Endothelial cell of umbilical vein (primary cell): ENCODE measurements at regions of chr12 and their contacts with region 1.

Region 1: DNA sequence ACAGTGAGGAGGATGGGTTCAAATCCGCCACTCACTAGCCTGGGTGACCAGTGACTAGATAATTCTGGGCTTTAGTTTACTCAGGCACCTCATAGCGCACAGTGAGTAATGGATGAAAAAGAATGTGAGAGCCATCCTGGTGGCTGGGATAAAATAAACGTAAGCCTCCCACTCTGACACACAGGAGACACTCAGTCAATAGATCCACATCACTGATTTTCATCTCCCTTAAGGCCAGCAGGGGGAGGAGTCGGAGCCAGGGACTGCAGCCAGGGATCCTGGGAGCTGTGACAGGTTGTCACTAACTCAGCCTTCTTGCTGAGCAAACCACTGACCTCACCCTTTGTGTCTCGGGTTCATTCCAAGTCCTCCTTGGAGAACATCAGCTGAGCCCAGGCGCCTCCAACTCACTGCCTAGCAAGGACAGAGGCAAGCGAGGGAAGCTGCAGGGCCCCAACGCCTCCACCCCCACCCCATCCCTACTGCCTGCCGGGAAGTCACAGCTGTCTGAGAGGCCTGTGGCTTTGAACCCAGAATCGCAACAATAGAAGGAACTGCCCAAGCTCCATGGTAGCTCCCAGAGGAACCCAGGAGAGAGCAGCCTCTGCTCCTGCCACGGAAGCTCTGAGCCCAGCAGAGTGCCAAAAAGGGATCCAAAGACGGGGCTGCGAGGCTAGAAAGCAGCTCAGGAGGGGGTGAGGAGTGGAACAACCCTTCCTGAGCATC is 30.7 kb downstream of the PXN start:
- DNase-seq: peak; percentile 79
- H3K4me3 ChIP-seq: no peak overlapping the region
- H3K27ac ChIP-seq: peak overlapping the region; percentile 100
- H3K4me1 ChIP-seq: peaks cover 87% of the 10 kb centered on the region
- H3K27me3 ChIP-seq: no peaks in the 10 kb centered on the region
- CTCF ChIP-seq: peak; percentile 50 to 55
- POLR2A ChIP-seq: peak; percentile 22

Region 2: GRCh38 chr12:120067084-120067869 is 167.5 kb before region 1 on chr12:
- CTCF ChIA-PET with region 1: no interaction called
- POLR2A ChIA-PET with region 1: no interaction called
- dilution Hi-C with region 1: no loop called
- intact Hi-C with region 1: no loop called
- DNase-seq: no peak
- H3K4me3 ChIP-seq: no peak overlapping the region
- H3K27ac ChIP-seq: no peak overlapping the region
- H3K4me1 ChIP-seq: no peaks in the 10 kb centered on the region
- H3K27me3 ChIP-seq: peaks cover 25 to 37% of the 10 kb centered on the region in 2 experiments
- CTCF ChIP-seq: no peak
- POLR2A ChIP-seq: no peak

Region 3: GRCh38 chr12:120200364-120200800 is 34.4 kb before region 1 on chr12:
- CTCF ChIA-PET with region 1: interaction called, 15 read pairs
- POLR2A ChIA-PET with region 1: interaction called, 46 read pairs
- dilution Hi-C with region 1: no loop called
- intact Hi-C with region 1: no loop called
- DNase-seq: peak; percentile 27
- H3K4me3 ChIP-seq: peak overlapping the region; percentile 31 to 84 (median 78)
- H3K27ac ChIP-seq: peak overlapping the region; percentile 34
- H3K4me1 ChIP-seq: peaks cover 42% of the 10 kb centered on the region
- H3K27me3 ChIP-seq: no peaks in the 10 kb centered on the region
- CTCF ChIP-seq: no peak
- POLR2A ChIP-seq: no peak

Region 4: DNA sequence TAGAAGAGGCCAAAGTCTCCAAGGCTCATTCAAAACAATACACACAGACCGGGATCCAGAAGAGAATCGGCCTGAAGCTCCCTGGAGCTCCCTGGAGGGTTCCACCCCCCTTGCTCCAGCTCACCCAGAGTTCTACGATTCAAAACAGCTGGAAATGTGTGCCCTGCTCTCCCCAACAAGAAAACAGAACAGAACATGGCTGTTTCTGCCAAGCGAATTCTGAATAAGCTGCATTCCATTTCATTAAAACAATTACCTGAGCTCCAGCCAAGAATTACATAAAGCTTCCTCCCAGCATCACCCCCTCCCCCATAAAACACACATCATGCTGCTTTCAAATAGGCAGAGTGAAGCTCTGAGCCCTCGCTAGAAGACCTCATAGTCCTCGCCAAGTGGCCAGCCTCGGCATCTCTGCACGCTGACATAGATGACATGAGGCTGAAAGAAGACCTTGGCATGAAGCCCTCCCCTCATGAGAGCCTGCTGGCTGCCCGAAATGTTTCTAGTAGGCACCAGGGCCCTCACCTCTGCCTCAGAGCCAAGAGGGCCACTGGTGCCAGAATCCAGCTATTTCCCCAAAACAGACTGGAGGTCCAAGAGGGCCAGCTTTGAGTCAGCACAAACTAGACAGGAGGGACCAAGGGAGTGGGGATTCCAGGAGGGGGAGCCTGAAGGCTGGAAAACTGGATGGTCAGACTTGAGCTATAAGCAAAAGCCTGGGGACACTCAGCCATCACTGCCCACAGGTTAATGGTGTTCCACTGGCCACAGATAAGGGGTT is 22.4 kb after region 1 on chr12:
- CTCF ChIA-PET with region 1: interaction called, 1,402 read pairs
- POLR2A ChIA-PET with region 1: interaction called, 88 read pairs
- dilution Hi-C with region 1: no loop called
- intact Hi-C with region 1: loop called (anchors 1 kb)
- DNase-seq: peak; percentile 98
- H3K4me3 ChIP-seq: no peak overlapping the region
- H3K27ac ChIP-seq: peak overlapping the region; percentile 96
- H3K4me1 ChIP-seq: peaks cover 71% of the 10 kb centered on the region
- H3K27me3 ChIP-seq: no peaks in the 10 kb centered on the region
- CTCF ChIP-seq: no peak
- POLR2A ChIP-seq: peak; percentile 24